H1 (cell line): ENCODE measurements at regions of chr13 and their contacts with region 1.

Region 1: DNA sequence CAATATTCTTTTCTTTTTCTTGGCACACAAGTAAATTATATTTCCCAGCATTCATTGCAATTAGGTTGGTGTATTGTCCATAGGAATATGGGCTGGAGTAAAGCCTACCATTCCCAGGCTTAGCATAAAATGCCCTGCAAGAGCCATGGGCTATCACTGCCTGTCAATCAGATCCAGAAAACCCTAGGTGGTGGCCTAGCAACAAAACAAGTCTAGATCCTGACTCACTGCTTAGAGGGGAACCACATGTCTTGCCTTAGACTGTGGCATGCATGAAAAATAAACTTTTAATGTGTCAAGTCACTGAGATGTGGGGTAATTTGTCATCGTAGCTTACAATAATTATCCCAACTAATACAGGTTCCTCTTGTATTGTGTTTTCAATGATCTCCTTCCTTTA is 16.2 kb downstream of the SOX21 start:
- DNase-seq: no peak
- H3K4me3 ChIP-seq: no peak overlapping the region; a peak in 1 of 8 replicates
- H3K27ac ChIP-seq: no peak overlapping the region
- H3K4me1 ChIP-seq: peaks cover 0 to 4% (median 0%) of the 10 kb centered on the region in 4 experiments; a peak in 2 of 7 replicates
- H3K27me3 ChIP-seq: peaks cover 13 to 24% (median 18%) of the 10 kb centered on the region in 4 experiments
- CTCF ChIP-seq: no peak
- EP300 ChIP-seq: no peak
- POLR2A ChIP-seq: no peak
- RAD21 ChIP-seq: no peak

Region 2: DNA sequence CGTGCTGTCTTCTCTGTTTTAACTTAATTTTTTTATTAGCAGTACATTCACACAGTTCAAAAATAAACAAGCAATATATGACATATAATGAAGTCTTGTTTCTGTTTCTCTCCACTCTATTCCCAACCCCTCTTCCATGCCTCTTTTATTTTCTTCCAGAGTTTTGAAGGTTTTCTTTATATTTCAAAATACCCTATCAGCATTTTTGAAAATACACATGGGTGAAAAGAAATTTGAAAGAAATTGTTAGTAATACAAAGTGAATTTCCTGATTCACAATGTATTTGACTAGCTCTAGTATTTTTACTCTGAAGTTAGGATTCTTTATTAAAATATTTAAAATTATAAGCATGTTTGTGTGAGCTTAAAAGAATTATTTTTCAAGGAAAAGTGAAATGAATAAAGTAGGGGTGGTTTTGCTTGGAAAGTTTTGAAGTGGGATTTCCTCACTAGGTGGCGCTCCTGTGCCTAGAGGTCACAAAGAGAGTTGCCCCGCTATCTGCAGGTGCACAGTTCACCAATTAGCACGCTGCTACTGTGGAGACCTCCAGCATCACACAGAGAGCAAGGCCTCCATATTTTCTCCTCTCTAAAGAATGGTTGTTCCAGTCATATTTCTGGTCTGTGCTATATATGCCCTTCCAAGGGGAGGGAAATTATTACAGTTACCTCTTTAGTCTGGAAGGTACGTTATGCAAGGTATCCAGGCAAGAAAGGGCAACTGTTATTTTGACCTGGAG is 21.4 kb before region 1 on chr13:
- CTCF ChIA-PET with region 1: interaction called, 15 read pairs
- POLR2A ChIA-PET with region 1: interaction called, 3 read pairs
- DNase-seq: peak in 1 of 2 experiments; percentile 85
- H3K4me3 ChIP-seq: no peak overlapping the region
- H3K27ac ChIP-seq: no peak overlapping the region
- H3K4me1 ChIP-seq: peaks cover 0 to 3% (median 0%) of the 10 kb centered on the region in 4 experiments; a peak in 3 of 7 replicates
- H3K27me3 ChIP-seq: no peaks in the 10 kb centered on the region
- CTCF ChIP-seq: peak; percentile 57 to 78 (median 73)
- EP300 ChIP-seq: no peak
- POLR2A ChIP-seq: no peak
- RAD21 ChIP-seq: peak; percentile 85 to 87